Activated CD4-positive, alpha-beta memory T cell treated with anti-CD3 and anti-CD28 coated beads for 36 hours (primary cell): ENCODE measurements at regions of chr17 and their contacts with region 1.

Region 1: DNA sequence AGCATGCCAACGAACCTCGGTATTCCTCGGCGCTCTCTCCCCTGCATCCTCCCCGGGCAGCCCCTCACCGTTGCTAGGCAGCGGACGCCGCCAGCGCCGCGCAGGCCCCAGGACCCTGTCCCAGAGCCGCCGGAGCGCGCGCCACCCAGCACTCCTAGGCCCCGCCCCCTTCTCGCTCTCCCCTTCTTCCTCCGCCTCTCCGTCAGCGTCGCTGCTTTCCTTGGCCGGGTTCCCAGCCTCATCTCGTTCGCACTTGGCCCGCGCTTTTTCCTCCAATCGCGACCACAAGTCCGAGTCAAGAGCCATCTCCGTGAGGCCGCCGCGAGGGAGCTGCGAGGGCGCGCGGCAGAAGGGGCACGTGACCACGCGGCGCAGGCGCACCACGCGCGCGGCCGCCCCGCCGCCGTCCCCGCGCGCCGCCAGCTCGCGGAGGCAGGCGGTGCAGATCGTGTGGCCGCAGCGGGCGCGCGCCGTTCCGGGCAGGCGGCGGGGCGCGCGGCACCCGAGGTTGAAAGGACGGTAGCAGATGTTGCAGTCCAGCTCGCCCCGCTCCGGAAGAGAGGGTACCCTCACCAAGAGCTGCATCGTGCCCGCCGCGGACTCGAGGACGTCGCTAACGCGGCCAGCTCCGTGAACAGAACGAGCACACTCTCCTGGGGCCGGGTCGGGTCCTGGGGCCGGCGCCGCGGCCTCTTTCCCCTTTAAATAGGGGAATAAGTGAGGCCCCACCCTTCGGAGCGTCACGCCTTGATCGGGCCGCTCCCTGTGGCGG is at the start of gene RNF227:
- DNase-seq: peak; percentile 92
- H3K4me3 Mint-ChIP-seq: peak within 1 kb of the TSS; percentile 85
- H3K27ac Mint-ChIP-seq: peak within 1 kb of the TSS; percentile 86
- H3K4me1 Mint-ChIP-seq: peaks cover 29% of the 10 kb centered on the region
- H3K27me3 Mint-ChIP-seq: no peaks in the 10 kb centered on the region
- total RNA-seq, gene RNF227: 2.7 to 3.3 TPM

Region 2: GRCh38 chr17:7897773-7898172 is 18.0 kb before region 1 on chr17:
- CTCF ChIA-PET with region 1: interaction called, 10 read pairs
- POLR2A ChIA-PET with region 1: interaction called, 6 read pairs
- intact Hi-C with region 1: no loop called
- DNase-seq: peak; percentile 47
- H3K4me3 Mint-ChIP-seq: no peak overlapping the region
- H3K27ac Mint-ChIP-seq: peak overlapping the region; percentile 73
- H3K4me1 Mint-ChIP-seq: peaks cover 17% of the 10 kb centered on the region
- H3K27me3 Mint-ChIP-seq: no peaks in the 10 kb centered on the region

Region 3: DNA sequence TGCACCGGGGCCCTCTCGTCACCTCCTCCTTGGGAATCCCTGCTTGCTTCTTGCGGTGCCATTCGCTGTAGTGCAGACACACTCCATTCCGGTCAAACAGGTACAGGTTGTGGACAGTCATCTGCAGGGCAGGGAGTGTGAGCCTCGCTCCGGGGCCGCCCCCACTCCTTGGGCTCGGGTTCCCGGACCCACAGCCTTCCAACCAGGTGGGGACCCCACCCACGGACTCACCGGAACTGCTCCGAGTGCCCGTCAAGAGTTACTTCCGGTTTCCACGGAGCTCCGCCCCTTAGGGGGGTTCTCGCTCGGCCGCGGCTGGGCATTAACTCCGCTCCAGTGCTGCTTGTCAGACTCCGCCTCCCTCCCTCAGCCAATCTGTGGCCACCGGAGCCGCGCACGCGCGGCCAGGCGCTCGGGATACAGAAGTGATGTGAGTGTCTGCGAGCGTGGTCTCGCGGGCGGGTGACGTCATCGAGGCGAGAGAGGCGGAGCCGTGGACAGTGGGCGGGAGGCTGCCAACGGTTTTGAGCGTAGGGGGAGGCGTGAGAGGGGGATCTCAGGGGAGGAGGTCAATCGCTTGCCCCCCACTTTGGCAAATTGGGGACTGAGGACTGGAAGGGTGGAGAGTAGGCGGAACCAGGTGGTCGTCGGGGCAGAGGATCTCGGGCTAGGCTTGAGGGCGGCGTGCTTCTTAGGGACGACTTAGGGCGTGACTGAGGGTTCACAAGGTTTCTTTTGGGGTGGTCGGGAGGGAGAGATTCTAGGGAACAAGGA is 16.1 kb after region 1 on chr17 and contains the starts of genes CNTROB and TRAPPC1:
- CTCF ChIA-PET with region 1: interaction called, 18 read pairs
- POLR2A ChIA-PET with region 1: interaction called, 42 read pairs
- intact Hi-C with region 1: loop called (anchors 1 kb)
- DNase-seq: peak; percentile 100
- H3K4me3 Mint-ChIP-seq: peak within 1 kb of the TSS; percentile 93
- H3K27ac Mint-ChIP-seq: peak within 1 kb of the TSS; percentile 88
- H3K4me1 Mint-ChIP-seq: peaks cover 47% of the 10 kb centered on the region
- H3K27me3 Mint-ChIP-seq: no peaks in the 10 kb centered on the region
- total RNA-seq, gene CNTROB: 45.9 to 50.1 TPM
- total RNA-seq, gene TRAPPC1: 197 to 201 TPM

Region 4: DNA sequence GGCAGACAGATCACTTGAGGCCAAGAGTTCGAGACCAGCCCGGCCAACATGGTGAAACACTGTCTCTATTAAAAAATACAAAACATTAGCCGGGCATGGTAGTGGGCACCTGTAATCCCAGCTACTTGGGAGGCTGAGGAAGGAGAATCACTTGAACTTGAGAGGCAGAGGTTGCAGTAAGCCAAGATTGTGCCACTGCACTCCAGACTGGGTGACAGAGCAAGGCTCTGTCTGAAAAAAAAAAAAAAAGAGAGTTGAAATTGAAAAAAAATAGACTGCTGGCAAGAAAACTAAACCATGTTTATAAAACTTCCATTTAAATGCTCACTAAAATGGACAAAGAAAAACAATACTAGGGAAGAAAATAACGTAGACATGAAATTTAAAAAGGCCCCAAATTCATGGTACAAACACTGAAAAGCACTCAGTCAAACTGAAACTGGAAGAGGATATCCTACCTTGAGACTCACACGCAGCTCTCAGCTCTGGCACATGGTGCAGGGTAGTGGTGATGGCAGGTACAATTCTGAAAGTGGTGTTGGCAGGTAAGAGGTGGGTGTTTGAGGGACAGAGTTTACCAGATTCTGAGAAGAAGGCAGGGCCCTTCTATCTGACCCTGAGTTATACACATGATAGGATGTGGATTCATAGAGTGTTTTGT is 35.5 kb after region 1 on chr17:
- CTCF ChIA-PET with region 1: no interaction called
- POLR2A ChIA-PET with region 1: interaction called, 4 read pairs
- intact Hi-C with region 1: loop called (anchors 1 kb)
- DNase-seq: peak; percentile 69
- H3K4me3 Mint-ChIP-seq: no peak overlapping the region
- H3K27ac Mint-ChIP-seq: peak overlapping the region; percentile 72
- H3K4me1 Mint-ChIP-seq: peaks cover 25% of the 10 kb centered on the region
- H3K27me3 Mint-ChIP-seq: no peaks in the 10 kb centered on the region